Right ventricle myocardium inferior (tissue), 1 donor: ENCODE measurements at regions of chr17 and their contacts with region 1.

Region 1: DNA sequence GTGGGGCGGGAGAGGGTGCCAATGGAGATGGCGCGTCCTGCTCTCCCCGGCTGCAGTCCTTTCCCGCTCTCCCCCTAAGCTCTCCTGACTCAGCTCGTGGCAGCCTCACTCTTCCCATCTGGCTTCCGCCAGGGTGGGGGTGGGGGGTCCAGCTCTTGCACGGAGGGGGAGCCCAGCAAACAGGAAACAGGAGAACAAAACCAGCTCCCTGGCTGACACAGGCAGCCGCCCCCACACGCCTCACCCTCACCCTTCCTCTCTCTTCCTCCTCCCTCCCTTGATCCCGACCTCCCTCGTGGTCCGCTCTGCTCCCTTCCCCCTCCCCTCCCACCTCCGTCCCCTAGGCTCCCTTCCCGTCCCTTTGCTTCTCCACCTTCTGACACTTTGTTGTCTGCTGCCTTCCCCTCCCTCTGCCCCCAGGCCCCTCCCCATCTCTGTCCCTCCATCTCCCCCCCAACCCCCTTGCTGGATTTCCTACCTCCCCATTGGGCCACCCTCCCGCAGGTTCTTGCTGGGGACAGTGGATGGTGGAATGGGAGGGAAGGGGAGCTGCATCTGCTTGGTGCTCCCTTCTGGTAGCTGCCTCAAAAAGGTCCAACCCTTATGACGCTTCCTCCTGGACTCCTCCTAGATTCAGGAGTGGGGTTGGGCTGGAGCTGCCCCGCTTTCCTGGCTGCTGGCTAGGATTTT is 23.7 kb downstream of the ARHGAP23 start:
- DNase-seq: no peak
- ATAC-seq: no peak

Region 2: GRCh38 chr17:38464723-38465390 is 12.9 kb after region 1 on chr17:
- intact Hi-C with region 1: loop called (anchors 1 kb)
- DNase-seq: peak; percentile 91
- ATAC-seq: peak; percentile 83